BJ (cell line): ENCODE measurements at regions of chr3 and their contacts with region 1.

Region 1: GRCh38 chr3:148289159-148289558 is 408.5 kb upstream of the AGTR1 start:
- DNase-seq: no peak
- H3K4me3 ChIP-seq: no peak overlapping the region
- H3K27me3 ChIP-seq: no peaks in the 10 kb centered on the region
- CTCF ChIP-seq: no peak

Region 2: DNA sequence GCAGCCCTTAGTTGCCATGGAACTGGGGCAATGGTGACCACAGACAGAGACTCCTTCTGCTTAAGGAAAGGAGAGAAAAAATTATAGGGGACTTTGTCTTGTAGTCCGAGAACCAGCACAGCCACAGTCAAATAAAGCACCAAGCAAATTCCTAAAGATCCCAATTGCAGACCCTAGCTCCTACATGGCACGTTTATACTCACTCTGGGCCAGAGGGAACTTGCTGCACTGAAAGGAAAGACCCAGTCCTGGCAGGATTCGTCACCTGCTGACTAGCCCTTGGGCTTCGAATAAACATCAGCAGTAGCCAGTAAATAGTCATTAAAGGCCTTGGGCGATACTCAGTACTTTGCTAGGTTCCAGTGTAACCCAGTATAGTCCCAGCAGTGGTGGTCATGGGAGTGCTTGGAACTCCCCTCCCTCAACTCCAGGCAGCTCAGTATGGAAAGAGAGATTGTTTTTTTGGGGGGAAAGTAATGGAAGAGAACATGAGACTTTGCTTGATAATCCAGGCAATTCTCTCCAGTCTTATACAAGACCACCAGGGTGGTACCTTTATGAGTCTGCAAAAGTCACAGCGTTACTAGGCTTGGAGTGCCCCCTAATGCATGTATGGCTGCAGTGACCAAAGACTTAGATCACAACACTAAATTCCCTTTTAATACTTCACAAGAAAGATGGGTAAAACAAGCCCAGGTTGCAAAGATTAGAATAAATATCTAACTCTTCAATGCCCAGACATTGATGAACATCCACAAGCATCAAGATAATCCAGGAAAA is 342.2 kb after region 1 on chr3:
- CTCF ChIA-PET with region 1: no interaction called
- POLR2A ChIA-PET with region 1: interaction called, 11 read pairs
- DNase-seq: no peak
- H3K4me3 ChIP-seq: no peak overlapping the region
- H3K27me3 ChIP-seq: no peaks in the 10 kb centered on the region
- CTCF ChIP-seq: no peak